Activated T-helper 1 cell treated with anti-CD3 and anti-CD28 coated beads, Interleukin-12 subunit alpha, Interleukin-12 subunit beta, Interleukin-2, Interleukin-4 antibody, amounts not matched to agents 30 ng/mL and 10 ng/mL and 1 ng/mL, durations not matched to agents 14 hours and 24 hours and 36 hours (primary cell): ENCODE measurements at regions of chr9 and their contacts with region 1.

Region 1: DNA sequence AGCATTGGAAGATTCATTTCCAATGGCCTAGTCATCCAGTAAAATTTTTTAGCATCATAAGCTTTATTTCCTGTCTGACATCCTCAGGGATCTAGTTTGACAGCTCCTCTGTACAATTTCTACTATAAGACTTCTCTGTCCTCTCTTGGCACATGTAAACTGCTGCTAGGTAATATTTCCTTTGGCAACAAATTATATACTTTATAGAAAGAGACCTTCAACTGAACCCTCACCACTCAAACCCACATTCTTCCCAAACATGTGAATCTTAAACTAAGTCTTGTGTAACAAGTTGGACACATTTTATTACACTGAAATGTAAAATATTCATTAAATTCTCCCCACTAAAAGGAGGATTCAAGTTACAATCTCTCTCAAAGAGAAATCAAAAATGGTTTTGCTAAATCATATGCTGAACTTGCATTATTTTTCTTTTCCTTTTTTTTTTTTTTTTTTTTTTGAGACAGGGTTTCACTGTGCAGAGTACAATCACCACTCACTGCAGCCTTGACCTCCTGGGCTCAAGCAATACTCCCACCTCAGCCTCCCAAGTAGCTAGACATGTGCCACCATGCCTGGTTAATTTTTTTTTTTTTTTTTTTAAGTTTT is 36.9 kb downstream of the SCAI start:
- DNase-seq: no peak
- H3K4me3 Mint-ChIP-seq: no peak overlapping the region
- H3K27ac Mint-ChIP-seq: no peak overlapping the region
- H3K4me1 Mint-ChIP-seq: no peaks in the 10 kb centered on the region
- H3K27me3 Mint-ChIP-seq: no peaks in the 10 kb centered on the region

Region 2: GRCh38 chr9:125089331-125089730 is 17.1 kb before region 1 on chr9:
- intact Hi-C with region 1: loop called (anchors 1 kb)
- DNase-seq: no peak
- H3K4me3 Mint-ChIP-seq: no peak overlapping the region
- H3K27ac Mint-ChIP-seq: no peak overlapping the region
- H3K4me1 Mint-ChIP-seq: peaks cover 15% of the 10 kb centered on the region
- H3K27me3 Mint-ChIP-seq: no peaks in the 10 kb centered on the region